Endothelial cell of umbilical vein (primary cell): ENCODE measurements at regions of chr5 and their contacts with region 1.

Region 1: DNA sequence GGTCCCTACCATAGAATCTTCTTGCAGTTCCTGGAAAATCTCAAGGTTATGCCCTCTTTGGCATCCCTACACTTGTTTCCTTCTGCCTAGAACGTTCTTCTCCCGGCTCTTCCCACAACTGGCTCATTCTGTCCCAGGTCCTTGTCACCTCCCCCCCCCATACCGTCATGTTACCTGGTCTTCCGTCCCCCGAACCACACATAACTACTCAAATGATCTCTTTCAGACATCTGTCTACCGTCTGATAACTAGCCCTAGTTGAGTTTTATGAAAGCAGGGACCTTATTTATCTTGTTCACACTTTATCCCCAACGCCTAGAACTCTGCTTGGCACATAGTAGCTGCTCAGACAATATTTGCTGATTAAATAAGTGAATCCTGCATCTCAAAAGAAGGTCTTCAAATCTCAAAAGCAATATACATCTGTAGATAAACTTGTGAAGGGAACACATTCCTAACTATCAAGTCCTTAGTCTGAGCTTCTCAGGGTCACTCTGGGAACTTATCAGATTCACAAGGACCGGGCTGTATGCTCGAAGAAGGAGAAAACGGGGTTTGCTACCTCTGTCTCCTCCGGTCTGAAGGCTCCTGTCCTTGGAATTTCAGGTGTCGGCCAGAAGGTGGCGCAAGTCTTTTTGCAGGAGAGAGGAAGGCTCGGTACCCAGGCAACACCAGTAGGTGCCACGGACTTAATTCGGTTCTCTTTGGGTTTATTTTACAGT is 30.0 kb downstream of the LCP2 start:
- DNase-seq: peak; percentile 75
- H3K4me3 ChIP-seq: no peak overlapping the region
- H3K27ac ChIP-seq: no peak overlapping the region
- H3K4me1 ChIP-seq: no peaks in the 10 kb centered on the region
- H3K27me3 ChIP-seq: peaks cover 17 to 35% of the 10 kb centered on the region in 2 experiments
- CTCF ChIP-seq: peak; percentile 81 to 83
- POLR2A ChIP-seq: no peak

Region 2: GRCh38 chr5:170100066-170100943 is 167.3 kb before region 1 on chr5:
- CTCF ChIA-PET with region 1: no interaction called
- POLR2A ChIA-PET with region 1: no interaction called
- dilution Hi-C with region 1: no loop called
- intact Hi-C with region 1: loop called (anchors 5 kb)
- DNase-seq: peak; percentile 80
- H3K4me3 ChIP-seq: no peak overlapping the region
- H3K27ac ChIP-seq: no peak overlapping the region
- H3K4me1 ChIP-seq: peaks cover 19% of the 10 kb centered on the region
- H3K27me3 ChIP-seq: no peaks in the 10 kb centered on the region
- CTCF ChIP-seq: peak; percentile 63 to 71
- POLR2A ChIP-seq: no peak

Region 3: GRCh38 chr5:170293273-170293672 is 25.7 kb after region 1 on chr5:
- CTCF ChIA-PET with region 1: no interaction called
- POLR2A ChIA-PET with region 1: no interaction called
- dilution Hi-C with region 1: no loop called
- intact Hi-C with region 1: no loop called
- DNase-seq: no peak
- H3K4me3 ChIP-seq: no peak overlapping the region
- H3K27ac ChIP-seq: no peak overlapping the region
- H3K4me1 ChIP-seq: no peaks in the 10 kb centered on the region
- H3K27me3 ChIP-seq: peaks cover 3 to 5% of the 10 kb centered on the region in 2 experiments
- CTCF ChIP-seq: no peak
- POLR2A ChIP-seq: no peak

Region 4: DNA sequence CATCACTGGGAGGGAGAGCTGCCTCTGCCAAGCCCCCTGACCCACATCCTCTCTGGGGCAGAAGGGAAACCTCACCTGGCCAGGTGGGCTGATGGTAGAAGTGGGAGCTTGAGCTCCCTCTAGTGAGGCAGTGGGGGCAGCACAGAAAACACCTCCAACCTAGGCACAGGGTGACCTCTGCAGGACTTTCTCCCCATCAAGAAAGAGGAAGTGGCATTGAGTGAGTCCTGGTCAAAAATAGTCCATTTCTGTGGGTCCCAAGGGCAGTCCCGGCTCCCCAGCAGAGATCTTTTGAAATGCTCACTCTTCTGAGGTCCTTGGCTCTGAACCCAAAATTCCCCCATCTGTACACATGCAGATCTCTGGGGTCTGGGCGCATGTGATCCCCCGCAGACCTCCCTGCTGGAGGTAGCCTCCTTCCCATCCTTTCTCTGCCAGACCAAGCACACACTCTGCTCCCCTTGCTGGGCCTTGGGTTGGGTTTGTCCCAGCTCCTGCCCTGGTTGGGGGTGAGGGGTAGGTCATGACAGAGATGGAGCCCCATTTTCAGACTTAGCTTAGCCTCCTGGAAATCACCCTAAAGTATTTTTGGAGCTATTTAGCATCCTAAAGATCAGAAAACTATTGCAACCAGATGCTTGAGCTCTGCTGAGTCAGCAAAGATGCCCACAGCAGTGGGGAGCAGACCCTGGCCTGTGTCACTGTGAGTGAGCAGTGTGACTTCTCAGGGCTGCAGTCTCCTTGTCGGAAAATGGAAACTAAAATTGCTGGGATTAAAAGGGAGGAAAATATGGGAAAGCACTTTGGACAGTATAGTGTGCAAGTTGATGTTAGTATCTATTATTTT is 71.6 kb after region 1 on chr5:
- CTCF ChIA-PET with region 1: interaction called, 8 read pairs
- POLR2A ChIA-PET with region 1: no interaction called
- dilution Hi-C with region 1: no loop called
- intact Hi-C with region 1: loop called (anchors 2 kb)
- DNase-seq: no peak
- H3K4me3 ChIP-seq: no peak overlapping the region
- H3K27ac ChIP-seq: no peak overlapping the region
- H3K4me1 ChIP-seq: no peaks in the 10 kb centered on the region
- H3K27me3 ChIP-seq: peaks cover 0 to 2% of the 10 kb centered on the region in 2 experiments
- CTCF ChIP-seq: no peak
- POLR2A ChIP-seq: no peak

Region 5: GRCh38 chr5:170404402-170404801 is 136.8 kb after region 1 on chr5:
- CTCF ChIA-PET with region 1: interaction called, 27 read pairs
- POLR2A ChIA-PET with region 1: no interaction called
- dilution Hi-C with region 1: no loop called
- intact Hi-C with region 1: no loop called
- DNase-seq: no peak
- H3K4me3 ChIP-seq: no peak overlapping the region
- H3K27ac ChIP-seq: no peak overlapping the region
- H3K4me1 ChIP-seq: no peaks in the 10 kb centered on the region
- H3K27me3 ChIP-seq: peaks cover 0 to 2% of the 10 kb centered on the region in 2 experiments
- CTCF ChIP-seq: no peak
- POLR2A ChIP-seq: no peak

Region 6: GRCh38 chr5:170623576-170624181 is 356.1 kb after region 1 on chr5:
- CTCF ChIA-PET with region 1: interaction called, 3 read pairs
- POLR2A ChIA-PET with region 1: no interaction called
- dilution Hi-C with region 1: no loop called
- intact Hi-C with region 1: loop called (anchors 2 kb)
- DNase-seq: peak; percentile 61
- H3K4me3 ChIP-seq: no peak overlapping the region
- H3K27ac ChIP-seq: no peak overlapping the region
- H3K4me1 ChIP-seq: no peaks in the 10 kb centered on the region
- H3K27me3 ChIP-seq: peaks cover 2 to 3% of the 10 kb centered on the region in 2 experiments
- CTCF ChIP-seq: peak; percentile 74 to 87
- POLR2A ChIP-seq: no peak